Prostate gland (tissue), 2 donors: ENCODE measurements at regions of chr1 and their contacts with region 1.

Region 1: DNA sequence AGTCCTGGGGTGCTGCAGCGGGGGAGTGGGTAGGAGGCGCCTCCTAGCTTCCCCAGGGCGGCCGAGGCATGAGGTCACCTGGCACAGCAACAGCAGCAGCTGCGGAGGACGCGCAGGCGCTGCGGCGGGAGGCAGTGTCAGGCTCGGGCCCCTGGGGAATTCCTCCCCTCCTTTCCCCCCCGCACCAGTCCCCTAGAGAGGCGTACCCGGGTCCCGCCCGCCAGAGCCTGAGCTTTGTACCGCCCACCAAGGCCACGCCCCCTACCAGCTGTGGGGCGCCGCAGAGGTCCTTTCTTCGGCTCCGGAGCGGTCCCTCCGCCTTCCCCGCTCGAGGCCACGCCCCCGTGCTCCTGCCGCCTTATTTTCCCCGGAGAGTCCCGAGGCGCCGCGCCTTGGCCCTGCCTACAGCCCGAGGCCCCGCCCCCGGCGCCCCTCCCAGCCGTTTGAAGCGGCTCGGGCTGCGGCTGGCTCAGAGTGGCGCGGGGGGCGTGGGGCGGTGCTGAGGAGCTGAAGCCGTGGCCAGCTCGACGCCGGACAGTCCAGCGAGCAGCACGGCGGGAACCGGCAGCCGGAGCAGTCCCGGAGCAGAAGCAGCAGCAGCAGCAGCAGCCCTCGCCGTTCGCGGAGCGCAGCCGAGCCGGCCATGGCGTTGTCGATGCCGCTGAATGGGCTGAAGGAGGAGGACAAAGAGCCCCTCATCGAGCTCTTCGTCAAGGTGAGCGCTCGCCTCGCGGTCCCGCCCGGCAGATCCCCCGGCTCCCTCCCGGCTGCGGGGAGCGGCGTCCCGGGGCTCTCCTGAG is at the start of gene CLIC4:
- DNase-seq: peak; percentile 100
- H3K4me3 ChIP-seq: peak within 1 kb of the TSS; percentile 95 to 99
- H3K27ac ChIP-seq: peak within 1 kb of the TSS; percentile 95 to 98
- H3K4me1 ChIP-seq: no peaks in the 10 kb centered on the region
- H3K27me3 ChIP-seq: no peaks in the 10 kb centered on the region
- CTCF ChIP-seq: peak in 3 of 4 experiments; percentile 21 to 54 (median 53)
- POLR2A ChIP-seq: peak; percentile 100
- total RNA-seq, gene CLIC4: 77.2 to 124 TPM

Region 2: DNA sequence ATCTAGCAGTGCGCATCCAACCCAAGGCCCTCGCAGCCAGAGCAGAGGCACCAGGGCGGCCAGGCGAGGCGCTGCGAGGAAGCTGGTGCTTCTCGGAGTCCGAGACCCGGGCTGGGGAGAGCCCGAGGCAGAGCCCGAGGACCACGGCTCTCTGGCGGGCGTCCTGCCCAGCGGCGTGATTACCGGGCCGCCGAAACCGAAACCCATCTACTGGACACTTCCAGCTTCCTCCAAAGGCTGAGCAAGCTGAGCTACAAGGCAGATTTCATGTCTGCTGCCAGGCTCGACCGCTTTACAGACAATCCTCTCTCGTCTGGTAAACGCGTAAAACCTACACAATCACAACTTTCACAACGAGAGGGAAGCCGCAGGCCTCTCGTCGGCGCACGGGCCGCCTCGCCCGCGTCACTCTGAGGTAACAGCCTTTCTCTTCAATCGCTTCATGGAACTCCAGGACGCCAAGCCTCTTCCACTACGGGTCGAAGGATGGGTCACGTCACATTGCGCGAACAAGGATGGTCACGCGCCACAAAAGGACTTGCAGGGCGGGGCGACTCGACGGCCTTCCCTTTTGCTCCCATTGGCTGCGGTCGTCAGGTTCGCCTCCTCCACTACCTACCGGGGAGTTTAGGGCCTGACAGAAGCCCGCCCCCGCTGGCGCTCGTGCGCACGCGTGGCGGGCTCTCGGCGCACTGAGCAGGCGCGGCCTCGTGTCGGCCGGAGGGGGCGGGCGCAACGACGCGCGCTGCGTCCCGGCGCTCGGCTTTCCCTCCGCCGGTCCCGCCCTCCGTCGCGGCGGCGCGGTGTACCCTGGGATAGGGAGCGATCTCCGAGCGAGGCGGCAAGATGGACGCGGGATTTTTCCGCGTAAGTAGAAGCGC is 102.4 kb before region 1 on chr1 and contains the start of gene SRRM1:
- intact Hi-C with region 1: loop called (anchors 2 kb)
- DNase-seq: peak; percentile 100
- H3K4me3 ChIP-seq: peak within 1 kb of the TSS; percentile 74 to 75
- H3K27ac ChIP-seq: peak within 1 kb of the TSS; percentile 96 to 99
- H3K4me1 ChIP-seq: no peaks in the 10 kb centered on the region
- H3K27me3 ChIP-seq: no peaks in the 10 kb centered on the region
- CTCF ChIP-seq: peak in 2 of 4 experiments; percentile 38 to 51
- POLR2A ChIP-seq: peak; percentile 98
- total RNA-seq, gene SRRM1: 119 to 147 TPM

Region 3: DNA sequence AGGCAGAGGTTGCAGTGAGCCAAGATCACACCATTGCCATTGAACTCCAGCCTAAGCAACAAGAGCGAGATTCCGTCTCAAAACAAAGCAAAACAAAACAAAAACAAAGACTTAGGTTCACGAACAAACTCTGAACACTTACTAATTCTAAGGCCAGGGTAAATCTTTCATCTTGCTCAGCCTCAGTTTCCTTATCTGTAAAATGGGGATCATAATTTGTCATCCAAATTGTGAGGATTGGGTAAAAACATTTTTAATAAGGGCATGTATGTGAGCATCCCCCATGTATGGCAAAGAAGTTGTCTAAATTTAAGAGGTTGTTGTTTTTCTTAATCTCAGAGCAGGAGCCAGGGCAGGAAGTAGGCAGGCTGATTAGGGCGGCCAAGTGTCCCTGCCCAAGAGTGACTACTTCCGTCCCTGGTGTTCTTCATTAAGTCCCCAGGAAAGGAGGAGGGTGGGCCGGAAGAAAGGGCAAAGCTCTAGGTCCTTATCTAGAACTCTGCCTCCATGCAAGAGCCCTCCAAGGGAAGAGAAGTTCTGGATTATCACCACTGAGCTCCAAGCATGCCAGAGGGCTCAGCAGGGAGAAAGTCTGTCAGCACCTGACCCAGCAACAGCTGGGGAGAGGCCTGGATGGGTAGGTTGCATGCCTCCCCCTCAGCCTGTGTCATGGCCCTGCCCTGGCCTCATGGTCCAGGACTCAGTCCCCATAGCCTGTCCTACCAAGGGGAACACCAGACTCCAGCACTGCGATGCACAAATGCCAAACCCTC is 49.7 kb before region 1 on chr1:
- intact Hi-C with region 1: loop called (anchors 5 kb)
- DNase-seq: no peak
- H3K4me3 ChIP-seq: no peak overlapping the region
- H3K27ac ChIP-seq: no peak overlapping the region
- H3K4me1 ChIP-seq: no peaks in the 10 kb centered on the region
- H3K27me3 ChIP-seq: no peaks in the 10 kb centered on the region
- CTCF ChIP-seq: no peak
- POLR2A ChIP-seq: no peak

Region 4: GRCh38 chr1:24779689-24780464 is 34.8 kb after region 1 on chr1:
- intact Hi-C with region 1: no loop called
- DNase-seq: no peak
- H3K4me3 ChIP-seq: no peak overlapping the region
- H3K27ac ChIP-seq: no peak overlapping the region
- H3K4me1 ChIP-seq: no peaks in the 10 kb centered on the region
- H3K27me3 ChIP-seq: no peaks in the 10 kb centered on the region
- CTCF ChIP-seq: no peak
- POLR2A ChIP-seq: no peak

Region 5: GRCh38 chr1:24830680-24831272 is 85.7 kb after region 1 on chr1:
- intact Hi-C with region 1: loop called (anchors 5 kb)
- DNase-seq: no peak
- H3K4me3 ChIP-seq: no peak overlapping the region
- H3K27ac ChIP-seq: no peak overlapping the region
- H3K4me1 ChIP-seq: no peaks in the 10 kb centered on the region
- H3K27me3 ChIP-seq: no peaks in the 10 kb centered on the region
- CTCF ChIP-seq: peak; percentile 40 to 88 (median 82)
- POLR2A ChIP-seq: no peak